Right lobe of liver (tissue), 6 donors: ENCODE measurements at regions of chr16 and their contacts with region 1.

Region 1: GRCh38 chr16:52408191-52408845 is 138.6 kb downstream of the TOX3 start:
- DNase-seq: no peak
- ATAC-seq: peak; percentile 90 to 96 (median 93)
- H3K4me3 ChIP-seq: no peak overlapping the region
- H3K27ac ChIP-seq: peak overlapping the region in 2 of 3 donors; percentile 66 to 86
- H3K4me1 ChIP-seq: peaks cover 0 to 25% (median 8%) of the 10 kb centered on the region in 4 donors
- H3K27me3 ChIP-seq: no peaks in the 10 kb centered on the region
- CTCF ChIP-seq: peak in 1 of 4 donors; percentile 1
- POLR2A ChIP-seq: no peak

Region 2: DNA sequence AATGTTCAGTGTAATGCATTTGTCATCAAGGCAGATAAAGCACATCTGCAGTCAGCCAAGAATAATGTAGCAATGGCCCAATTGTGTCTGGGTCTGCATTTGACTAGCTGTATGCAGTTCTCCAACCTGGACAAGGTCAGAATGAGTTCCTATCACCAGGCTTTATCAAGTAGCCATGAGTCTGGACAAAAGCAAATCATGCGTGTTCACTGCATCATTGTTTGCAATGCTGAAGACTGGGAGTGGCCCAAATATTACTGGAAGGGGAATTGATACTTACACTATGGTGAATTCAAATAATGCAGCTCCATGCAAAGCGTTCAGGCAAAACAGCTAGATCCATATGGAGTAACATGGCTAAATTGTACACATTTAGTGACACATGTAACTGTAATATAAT is 112.2 kb before region 1 on chr16:
- intact Hi-C with region 1: loop called in 1 of 2 experiments (anchors 5 kb)
- DNase-seq: no peak
- ATAC-seq: peak in 2 of 4 donors; percentile 29 to 31
- H3K4me3 ChIP-seq: no peak overlapping the region
- H3K27ac ChIP-seq: peak overlapping the region; percentile 6 to 80 (median 38)
- H3K4me1 ChIP-seq: peaks cover 0 to 43% (median 9%) of the 10 kb centered on the region in 4 donors
- H3K27me3 ChIP-seq: no peaks in the 10 kb centered on the region
- CTCF ChIP-seq: no peak
- POLR2A ChIP-seq: no peak

Region 3: GRCh38 chr16:52350031-52350642 is 58.2 kb before region 1 on chr16:
- intact Hi-C with region 1: no loop called
- DNase-seq: no peak
- ATAC-seq: no peak
- H3K4me3 ChIP-seq: no peak overlapping the region
- H3K27ac ChIP-seq: no peak overlapping the region
- H3K4me1 ChIP-seq: peaks cover 0 to 5% (median 0%) of the 10 kb centered on the region in 4 donors
- H3K27me3 ChIP-seq: no peaks in the 10 kb centered on the region
- CTCF ChIP-seq: no peak
- POLR2A ChIP-seq: no peak

Region 4: DNA sequence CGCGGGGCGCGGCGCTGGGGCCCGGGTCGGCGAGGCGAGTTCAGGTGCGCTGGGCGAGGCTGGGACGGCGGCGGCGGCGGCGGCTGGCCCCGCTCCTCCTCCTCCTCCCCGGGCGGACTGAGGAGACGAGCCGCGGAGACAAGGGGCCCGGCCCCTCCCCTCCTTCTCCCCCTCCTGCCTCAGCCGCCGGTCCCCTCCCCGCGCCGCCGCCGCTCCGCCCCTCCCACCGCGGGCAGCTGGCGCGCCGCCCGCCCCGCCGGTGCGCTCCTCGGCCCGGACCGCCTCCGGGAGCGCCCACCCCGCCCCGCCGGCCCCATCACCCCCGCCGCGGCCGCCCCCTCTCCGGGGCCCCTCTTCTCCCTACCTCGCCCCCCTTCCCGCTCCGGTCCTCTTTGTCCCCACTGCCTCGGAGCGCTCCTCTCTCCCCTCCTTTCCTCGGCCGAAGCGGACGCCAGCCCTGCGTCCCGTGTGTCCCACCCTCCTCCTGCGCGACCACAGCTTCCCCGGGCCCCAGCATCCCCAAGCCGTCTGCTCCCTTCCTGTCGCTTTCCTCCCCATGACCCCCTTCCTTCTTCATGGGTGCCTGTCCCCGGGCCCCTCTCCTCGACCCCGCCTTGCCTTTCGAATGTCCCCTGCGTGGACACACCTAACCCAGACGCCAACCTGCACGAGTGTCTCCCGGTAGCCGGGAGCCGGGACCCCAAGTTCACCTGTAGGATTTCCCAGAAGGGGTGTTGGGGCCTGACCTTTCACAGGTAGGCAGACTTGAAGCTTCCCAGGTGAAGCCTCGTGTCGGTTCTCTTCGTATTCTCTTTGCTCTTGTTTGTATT is 138.9 kb after region 1 on chr16 and contains the start of gene TOX3:
- intact Hi-C with region 1: no loop called
- DNase-seq: peak; percentile 55 to 78 (median 67)
- ATAC-seq: peak; percentile 67 to 78 (median 74)
- H3K4me3 ChIP-seq: peak within 1 kb of the TSS; percentile 53 to 67 (median 66)
- H3K27ac ChIP-seq: peak within 1 kb of the TSS; percentile 54 to 72 (median 56)
- H3K4me1 ChIP-seq: peaks cover 0 to 6% (median under 1%) of the 10 kb centered on the region in 4 donors
- H3K27me3 ChIP-seq: no peaks in the 10 kb centered on the region
- CTCF ChIP-seq: no peak
- POLR2A ChIP-seq: no peak
- total RNA-seq, gene TOX3: 0.92 to 5.8 (median 3.6) TPM

Region 5: GRCh38 chr16:52573365-52574299 is 165.3 kb after region 1 on chr16:
- intact Hi-C with region 1: no loop called
- DNase-seq: peak; percentile 32 to 62 (median 57)
- ATAC-seq: peak; percentile 86 to 92 (median 89)
- H3K4me3 ChIP-seq: no peak overlapping the region
- H3K27ac ChIP-seq: peak overlapping the region; percentile 23 to 81 (median 54)
- H3K4me1 ChIP-seq: peaks cover 0 to 25% (median 9%) of the 10 kb centered on the region in 4 donors
- H3K27me3 ChIP-seq: no peaks in the 10 kb centered on the region
- CTCF ChIP-seq: peak in 1 of 4 donors; percentile 20
- POLR2A ChIP-seq: peak; percentile 43

Region 6: GRCh38 chr16:52757746-52758472 is 349.6 kb after region 1 on chr16:
- intact Hi-C with region 1: no loop called
- DNase-seq: no peak
- ATAC-seq: no peak
- H3K4me3 ChIP-seq: no peak overlapping the region
- H3K27ac ChIP-seq: no peak overlapping the region
- H3K4me1 ChIP-seq: no peaks in the 10 kb centered on the region
- H3K27me3 ChIP-seq: no peaks in the 10 kb centered on the region
- CTCF ChIP-seq: no peak
- POLR2A ChIP-seq: no peak